Right lobe of liver (tissue), 6 donors: ENCODE measurements at regions of chr16 and their contacts with region 1.

Region 1: GRCh38 chr16:4123616-4124265 is 7.5 kb upstream of the ADCY9 start:
- DNase-seq: no peak
- ATAC-seq: no peak
- H3K4me3 ChIP-seq: no peak overlapping the region
- H3K27ac ChIP-seq: no peak overlapping the region
- H3K4me1 ChIP-seq: no peaks in the 10 kb centered on the region
- H3K27me3 ChIP-seq: no peaks in the 10 kb centered on the region
- CTCF ChIP-seq: no peak
- POLR2A ChIP-seq: no peak

Region 2: DNA sequence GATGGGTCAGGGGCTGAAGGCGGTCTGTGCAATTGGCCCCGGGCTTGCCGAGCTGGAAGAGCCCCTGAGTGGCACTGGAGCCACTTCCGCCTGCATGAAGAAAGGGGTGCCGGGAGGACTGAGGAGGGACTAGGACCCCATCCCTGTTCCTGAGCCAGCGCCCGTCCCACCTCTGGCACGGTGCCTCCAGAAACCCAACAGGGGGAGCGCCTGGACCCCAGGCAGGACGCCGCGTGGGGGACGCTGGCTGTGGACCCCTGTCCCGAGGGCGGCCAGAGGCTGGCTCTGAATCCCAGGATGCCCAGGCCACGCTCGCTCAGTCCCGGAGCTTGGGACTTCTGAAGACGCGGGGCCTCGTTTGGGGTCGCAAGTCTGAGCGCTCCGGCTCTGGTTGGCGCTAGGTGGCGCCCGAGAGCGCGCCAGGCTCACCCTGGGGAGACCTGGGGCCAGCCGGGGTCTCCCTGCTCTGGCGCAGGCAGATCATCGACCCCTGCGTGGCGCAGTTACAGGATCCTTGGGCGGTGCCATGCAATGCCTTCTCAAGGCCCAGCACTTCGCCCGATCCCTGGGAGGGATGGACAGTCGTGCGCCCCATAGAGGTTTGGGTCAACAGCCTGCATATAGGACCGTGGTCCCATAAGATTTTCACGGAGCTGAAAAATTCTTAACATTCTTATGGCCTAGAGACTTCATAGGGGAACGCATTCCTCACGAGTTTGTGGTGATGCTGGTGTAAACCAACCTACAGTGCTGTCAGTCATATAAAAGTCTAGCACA is 184.7 kb before region 1 on chr16:
- intact Hi-C with region 1: no loop called
- DNase-seq: peak in 2 of 3 donors; percentile 60 to 68
- ATAC-seq: peak; percentile 83 to 87 (median 84)
- H3K4me3 ChIP-seq: peak overlapping the region; percentile 35 to 52 (median 47)
- H3K27ac ChIP-seq: no peak overlapping the region
- H3K4me1 ChIP-seq: peaks cover 0 to 9% (median 0%) of the 10 kb centered on the region in 4 donors
- H3K27me3 ChIP-seq: no peaks in the 10 kb centered on the region
- CTCF ChIP-seq: peak; percentile 72 to 97 (median 94)
- POLR2A ChIP-seq: no peak

Region 3: GRCh38 chr16:4253394-4254150 is 129.8 kb after region 1 on chr16:
- intact Hi-C with region 1: loop called in 1 of 2 experiments (anchors 10 kb)
- DNase-seq: peak; percentile 100
- ATAC-seq: peak; percentile 95 to 97 (median 96)
- H3K4me3 ChIP-seq: peak overlapping the region; percentile 51 to 74 (median 71)
- H3K27ac ChIP-seq: peak overlapping the region; percentile 78 to 95 (median 83)
- H3K4me1 ChIP-seq: no peaks in the 10 kb centered on the region
- H3K27me3 ChIP-seq: no peaks in the 10 kb centered on the region
- CTCF ChIP-seq: no peak
- POLR2A ChIP-seq: peak; percentile 91